ENCODE measurements at regions of chr5 and their contacts with region 1.

Region 1: DNA sequence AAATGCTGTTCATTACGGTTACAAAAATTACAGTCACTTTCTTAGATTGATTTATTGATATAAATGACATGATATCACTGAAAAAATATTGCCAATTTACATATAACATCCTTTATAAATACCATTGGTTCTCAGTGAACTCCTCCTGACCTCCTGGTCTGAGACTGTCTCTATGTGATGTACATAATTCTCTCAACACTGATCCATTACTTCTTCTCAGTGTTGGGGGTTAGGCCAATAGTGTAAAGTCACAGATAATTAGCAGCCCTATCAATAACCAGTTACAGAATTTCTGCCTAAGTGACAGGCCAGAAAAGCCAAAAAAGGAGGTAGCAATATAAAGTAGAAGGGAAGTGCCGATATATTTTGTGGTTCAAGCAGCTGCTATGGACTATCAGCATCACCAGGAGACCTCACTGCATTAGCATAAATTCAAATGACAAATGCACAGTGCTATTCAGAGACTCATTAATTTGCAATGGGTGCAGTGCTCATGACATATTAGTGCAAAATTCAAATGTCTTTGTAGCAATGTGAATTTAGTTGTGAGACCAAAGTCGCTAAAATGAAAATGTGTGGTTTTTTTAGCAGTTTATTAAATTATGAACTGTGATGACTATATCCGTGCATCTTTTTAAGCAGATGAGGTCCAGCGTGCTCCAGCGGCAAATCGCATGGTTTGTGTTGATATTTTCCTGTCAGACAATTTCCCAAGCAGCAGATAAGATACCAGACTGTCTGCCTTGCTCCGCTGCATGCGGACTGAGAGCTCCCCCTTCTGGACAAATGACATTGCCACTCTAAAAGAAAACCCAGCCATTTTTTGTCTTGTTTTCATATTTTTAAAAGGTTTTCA is 144.6 kb downstream of the CETN3 start:
- DNase-seq: peak; percentile 58
- ATAC-seq: peak; percentile 83
- H3K4me3 ChIP-seq: no peak overlapping the region
- H3K27ac ChIP-seq: no peak overlapping the region
- H3K4me1 ChIP-seq: no peaks in the 10 kb centered on the region
- H3K27me3 ChIP-seq: no peaks in the 10 kb centered on the region
- CTCF ChIP-seq: peak; percentile 70 to 97 (median 92)
- POLR2A ChIP-seq: no peak
- RAD21 ChIP-seq: peak; percentile 93

Region 2: GRCh38 chr5:89729623-89730301 is 535.2 kb before region 1 on chr5:
- CTCF ChIA-PET with region 1: interaction called, 3 read pairs
- POLR2A ChIA-PET with region 1: no interaction called
- RAD21 ChIA-PET with region 1: no interaction called
- intact Hi-C with region 1: loop called (anchors 2 kb)
- DNase-seq: peak; percentile 21
- ATAC-seq: peak; percentile 76
- H3K4me3 ChIP-seq: no peak overlapping the region
- H3K27ac ChIP-seq: no peak overlapping the region
- H3K4me1 ChIP-seq: no peaks in the 10 kb centered on the region
- H3K27me3 ChIP-seq: no peaks in the 10 kb centered on the region
- CTCF ChIP-seq: peak; percentile 42 to 61 (median 52); a peak in 4 of 6 replicates
- POLR2A ChIP-seq: no peak
- RAD21 ChIP-seq: peak; percentile 82

Region 3: GRCh38 chr5:89930591-89931392 is 334.1 kb before region 1 on chr5:
- CTCF ChIA-PET with region 1: no interaction called
- POLR2A ChIA-PET with region 1: no interaction called
- RAD21 ChIA-PET with region 1: interaction called in 1 of 2 experiments, 4 read pairs
- intact Hi-C with region 1: loop called (anchors 1 kb)
- DNase-seq: peak; percentile 45
- ATAC-seq: peak; percentile 83
- H3K4me3 ChIP-seq: peak overlapping the region in 1 of 2 experiments; percentile 31; a peak in 2 of 4 replicates
- H3K27ac ChIP-seq: peak overlapping the region; percentile 52; the same call in 1 of the 2 replicates
- H3K4me1 ChIP-seq: peaks cover 20 to 24% of the 10 kb centered on the region in 2 experiments
- H3K27me3 ChIP-seq: no peaks in the 10 kb centered on the region
- CTCF ChIP-seq: no peak
- POLR2A ChIP-seq: no peak
- RAD21 ChIP-seq: 0 out of 2 replicates have a peak, but pooled peaks have one; percentile 9

Region 4: GRCh38 chr5:90135779-90136378 is 129.0 kb before region 1 on chr5:
- CTCF ChIA-PET with region 1: no interaction called
- POLR2A ChIA-PET with region 1: no interaction called
- RAD21 ChIA-PET with region 1: no interaction called
- intact Hi-C with region 1: loop called (anchors 1 kb)
- DNase-seq: no peak
- ATAC-seq: peak; percentile 92
- H3K4me3 ChIP-seq: no peak overlapping the region
- H3K27ac ChIP-seq: no peak overlapping the region
- H3K4me1 ChIP-seq: peaks cover 0 to 3% of the 10 kb centered on the region in 2 experiments; a peak in 1 of 4 replicates
- H3K27me3 ChIP-seq: no peaks in the 10 kb centered on the region
- CTCF ChIP-seq: peak; percentile 13 to 61 (median 57); a peak in 4 of 6 replicates
- POLR2A ChIP-seq: no peak
- RAD21 ChIP-seq: peak; percentile 58

Region 5: GRCh38 chr5:90548069-90548593 is 283.2 kb after region 1 on chr5:
- CTCF ChIA-PET with region 1: no interaction called
- POLR2A ChIA-PET with region 1: no interaction called
- RAD21 ChIA-PET with region 1: no interaction called
- intact Hi-C with region 1: no loop called
- DNase-seq: peak; percentile 42
- ATAC-seq: peak; percentile 73
- H3K4me3 ChIP-seq: peak overlapping the region in 1 of 2 experiments; percentile 30; a peak in 1 of 4 replicates
- H3K27ac ChIP-seq: no peak overlapping the region
- H3K4me1 ChIP-seq: peaks cover 0 to 8% of the 10 kb centered on the region in 2 experiments; a peak in 2 of 4 replicates
- H3K27me3 ChIP-seq: no peaks in the 10 kb centered on the region
- CTCF ChIP-seq: no peak
- POLR2A ChIP-seq: no peak
- RAD21 ChIP-seq: no peak

Measured in HCT116 (cell line).